Natural killer cell (primary cell): ENCODE measurements at regions of chr14 and their contacts with region 1.

Region 1: GRCh38 chr14:49633640-49634546 is 1.2 kb downstream of the DNAAF2 start:
- DNase-seq: peak; percentile 91 to 97
- ATAC-seq: peak; percentile 84 to 95 (median 84)
- H3K4me3 ChIP-seq: peak overlapping the region; percentile 98
- H3K4me3 Mint-ChIP-seq: peak overlapping the region; percentile 97
- H3K27ac ChIP-seq: peak overlapping the region; percentile 93
- H3K27ac Mint-ChIP-seq: peak overlapping the region; percentile 96
- H3K4me1 ChIP-seq: peaks cover 32% of the 10 kb centered on the region
- H3K4me1 Mint-ChIP-seq: peaks cover 31 to 44% of the 10 kb centered on the region in 2 donors
- H3K27me3 ChIP-seq: no peaks in the 10 kb centered on the region
- H3K27me3 Mint-ChIP-seq: no peaks in the 10 kb centered on the region
- CTCF ChIP-seq: peak; percentile 89

Region 2: DNA sequence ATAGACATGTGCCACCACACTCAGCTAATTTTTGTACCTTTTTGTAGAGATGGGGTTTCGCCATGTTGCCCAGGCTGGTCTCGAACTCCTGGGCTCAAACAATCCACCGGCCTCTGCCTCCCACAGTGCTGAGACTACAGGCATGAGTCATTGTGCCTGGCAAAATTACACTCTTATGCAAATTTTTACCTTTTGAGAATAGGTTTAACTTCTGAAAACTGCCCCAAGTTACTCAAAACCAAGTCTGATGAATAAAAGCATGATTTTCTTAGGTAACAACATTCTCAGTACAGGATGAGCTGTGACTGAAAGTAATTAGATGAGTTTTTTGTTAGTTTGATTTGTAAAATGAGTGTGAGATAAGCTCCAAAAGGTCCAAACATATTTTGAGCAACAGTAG is 213.7 kb before region 1 on chr14:
- intact Hi-C with region 1: no loop called
- DNase-seq: no peak
- ATAC-seq: no peak
- H3K4me3 ChIP-seq: no peak overlapping the region
- H3K4me3 Mint-ChIP-seq: no peak overlapping the region
- H3K27ac ChIP-seq: no peak overlapping the region
- H3K27ac Mint-ChIP-seq: no peak overlapping the region
- H3K4me1 ChIP-seq: no peaks in the 10 kb centered on the region
- H3K4me1 Mint-ChIP-seq: no peaks in the 10 kb centered on the region
- H3K27me3 ChIP-seq: no peaks in the 10 kb centered on the region
- H3K27me3 Mint-ChIP-seq: peaks cover 16 to 28% of the 10 kb centered on the region in 2 donors
- CTCF ChIP-seq: no peak

Region 3: DNA sequence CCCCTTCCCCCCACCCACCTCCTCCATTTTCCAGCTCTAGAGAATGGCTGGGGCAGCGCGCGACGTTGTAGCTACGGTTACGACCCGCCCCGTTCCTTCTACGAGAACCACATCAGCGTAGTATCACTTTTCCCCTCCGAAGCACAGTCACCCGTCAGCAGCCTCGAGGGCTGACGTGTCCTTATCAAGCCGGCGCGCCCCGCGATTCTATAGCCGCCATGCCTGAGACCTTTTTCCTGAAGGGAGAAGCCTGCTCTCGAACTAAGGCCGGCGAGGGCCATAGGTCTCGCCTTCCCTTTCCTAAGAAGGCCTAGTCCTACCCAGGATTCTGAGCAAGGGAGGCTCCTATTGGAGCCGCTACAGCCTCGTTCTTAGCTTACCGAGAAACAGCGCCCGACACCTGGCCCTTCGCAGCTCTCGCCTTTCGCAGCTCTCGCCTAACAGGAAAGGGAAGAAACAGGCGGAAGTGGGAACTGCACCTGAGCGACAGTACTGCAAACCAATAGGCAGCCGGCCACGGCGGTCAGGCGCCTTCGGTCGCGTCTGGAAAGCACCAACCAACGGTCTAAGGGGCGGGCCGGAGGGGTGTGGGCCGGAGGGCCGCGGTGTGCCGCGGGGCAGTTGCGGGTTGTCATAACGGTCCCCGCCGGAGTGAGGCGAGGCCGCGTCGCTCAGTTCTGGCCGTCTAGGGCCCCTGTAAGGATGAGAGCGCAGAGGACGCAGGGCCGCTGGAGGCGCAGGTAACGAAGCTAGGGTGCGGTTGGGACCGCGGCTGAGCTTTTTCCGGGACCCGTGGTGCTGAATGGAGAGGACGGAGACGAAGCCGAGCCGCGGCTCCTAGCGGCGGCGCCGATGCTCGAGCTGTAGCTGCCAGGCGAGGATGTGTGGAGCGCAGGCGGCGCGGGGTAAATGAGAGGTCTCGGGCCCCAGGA is 13.4 kb before region 1 on chr14 and contains the starts of genes MGAT2 and RPL36AL:
- intact Hi-C with region 1: loop called (anchors 1 kb)
- DNase-seq: peak; percentile 95 to 96
- ATAC-seq: peak; percentile 83 to 95 (median 89)
- H3K4me3 ChIP-seq: peak within 1 kb of the TSS; percentile 83
- H3K4me3 Mint-ChIP-seq: peak within 1 kb of the TSS; percentile 98
- H3K27ac ChIP-seq: peak within 1 kb of the TSS; percentile 95
- H3K27ac Mint-ChIP-seq: peak within 1 kb of the TSS; percentile 99
- H3K4me1 ChIP-seq: peaks cover 29% of the 10 kb centered on the region
- H3K4me1 Mint-ChIP-seq: peaks cover 41 to 58% of the 10 kb centered on the region in 2 donors
- H3K27me3 ChIP-seq: no peaks in the 10 kb centered on the region
- H3K27me3 Mint-ChIP-seq: no peaks in the 10 kb centered on the region
- CTCF ChIP-seq: peak; percentile 18
- total RNA-seq, gene MGAT2: 29.9 to 34.8 (median 33.8) TPM
- total RNA-seq, gene RPL36AL: 126 to 166 (median 150) TPM

Region 4: DNA sequence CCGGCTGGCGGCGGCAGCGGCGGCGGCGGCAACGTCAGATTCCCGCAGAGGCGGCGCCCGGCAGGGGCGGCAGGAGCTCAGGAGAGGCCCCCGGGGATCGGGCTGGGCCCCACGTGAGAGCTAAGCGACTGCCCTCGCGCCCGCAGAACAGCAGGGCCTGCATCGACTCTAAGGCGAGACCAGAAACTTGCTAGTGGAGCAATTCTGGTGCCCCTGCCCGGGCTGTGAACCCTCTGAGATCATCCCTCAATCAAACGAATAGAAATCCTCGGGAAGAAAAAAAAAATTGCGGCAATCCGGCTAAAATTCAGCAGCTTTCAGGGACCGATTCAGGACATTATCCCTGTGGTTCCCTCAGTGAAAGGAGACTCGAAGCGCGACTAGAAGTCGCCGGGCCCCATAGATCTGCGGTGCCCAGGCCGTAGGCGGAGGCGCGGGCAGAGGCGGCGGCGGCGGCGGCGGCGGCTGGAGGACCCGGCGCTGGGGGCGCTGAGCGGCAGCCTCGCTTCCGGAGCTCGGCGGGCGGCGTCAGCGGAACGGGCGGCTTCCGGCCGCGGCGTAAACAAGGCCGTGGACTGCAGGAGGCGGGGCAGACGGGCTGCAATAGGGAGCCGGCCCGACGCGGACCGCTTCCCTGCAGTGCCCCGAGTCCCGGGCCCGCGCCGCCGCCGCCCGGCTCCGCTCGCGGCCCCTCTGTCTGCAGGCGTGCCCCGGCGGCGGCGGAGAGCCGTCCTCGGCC is 133.8 kb after region 1 on chr14 and contains the start of gene KLHDC2:
- intact Hi-C with region 1: loop called (anchors 1 kb)
- DNase-seq: peak; percentile 86 to 93
- ATAC-seq: peak; percentile 76 to 94 (median 88)
- H3K4me3 ChIP-seq: peak within 1 kb of the TSS; percentile 69
- H3K4me3 Mint-ChIP-seq: peak within 1 kb of the TSS; percentile 96
- H3K27ac ChIP-seq: peak within 1 kb of the TSS; percentile 96
- H3K27ac Mint-ChIP-seq: peak within 1 kb of the TSS; percentile 97
- H3K4me1 ChIP-seq: peaks cover 22% of the 10 kb centered on the region
- H3K4me1 Mint-ChIP-seq: peaks cover 24 to 30% of the 10 kb centered on the region in 2 donors
- H3K27me3 ChIP-seq: no peaks in the 10 kb centered on the region
- H3K27me3 Mint-ChIP-seq: no peaks in the 10 kb centered on the region
- CTCF ChIP-seq: peak; percentile 29
- total RNA-seq, gene KLHDC2: 60.4 to 64.2 (median 63.2) TPM

Region 5: GRCh38 chr14:49852301-49853157 is 218.6 kb after region 1 on chr14 and contains the start of gene NEMF:
- intact Hi-C with region 1: loop called (anchors 2 kb)
- DNase-seq: peak; percentile 71 to 93
- ATAC-seq: peak; percentile 81 to 90 (median 82)
- H3K4me3 ChIP-seq: peak within 1 kb of the TSS; percentile 84
- H3K4me3 Mint-ChIP-seq: peak within 1 kb of the TSS; percentile 92
- H3K27ac ChIP-seq: peak within 1 kb of the TSS; percentile 86
- H3K27ac Mint-ChIP-seq: peak within 1 kb of the TSS; percentile 93 to 98
- H3K4me1 ChIP-seq: peaks cover 13% of the 10 kb centered on the region
- H3K4me1 Mint-ChIP-seq: peaks cover 38 to 45% of the 10 kb centered on the region in 2 donors
- H3K27me3 ChIP-seq: no peaks in the 10 kb centered on the region
- H3K27me3 Mint-ChIP-seq: no peaks in the 10 kb centered on the region
- CTCF ChIP-seq: peak; percentile 80
- total RNA-seq, gene NEMF: 120 to 126 (median 122) TPM

Region 6: GRCh38 chr14:50225067-50225973 is 591.4 kb after region 1 on chr14:
- intact Hi-C with region 1: loop called (anchors 10 kb)
- DNase-seq: no peak
- ATAC-seq: no peak
- H3K4me3 ChIP-seq: no peak overlapping the region
- H3K4me3 Mint-ChIP-seq: peak overlapping the region; percentile 50
- H3K27ac ChIP-seq: no peak overlapping the region
- H3K27ac Mint-ChIP-seq: peak overlapping the region; percentile 74 to 75
- H3K4me1 ChIP-seq: peaks cover 17% of the 10 kb centered on the region
- H3K4me1 Mint-ChIP-seq: peaks cover 63% of the 10 kb centered on the region in 2 donors
- H3K27me3 ChIP-seq: no peaks in the 10 kb centered on the region
- H3K27me3 Mint-ChIP-seq: no peaks in the 10 kb centered on the region
- CTCF ChIP-seq: no peak